Activated T-helper 1 cell treated with anti-CD3 and anti-CD28 coated beads, Interleukin-12 subunit alpha, Interleukin-12 subunit beta, Interleukin-2, Interleukin-4 antibody, amounts not matched to agents 30 ng/mL and 10 ng/mL and 1 ng/mL, durations not matched to agents 14 hours and 24 hours and 36 hours (primary cell): ENCODE measurements at regions of chr18 and their contacts with region 1.

Region 1: GRCh38 chr18:62186774-62187542 is at the starts of genes PIGN and RELCH:
- DNase-seq: peak; percentile 93
- H3K4me3 Mint-ChIP-seq: peak within 1 kb of the TSS; percentile 99
- H3K27ac Mint-ChIP-seq: peak within 1 kb of the TSS; percentile 96
- H3K4me1 Mint-ChIP-seq: peaks cover 68% of the 10 kb centered on the region
- H3K27me3 Mint-ChIP-seq: no peaks in the 10 kb centered on the region
- total RNA-seq, gene PIGN: 28.5 and 36.1 TPM in 2 replicates
- total RNA-seq, gene RELCH: 32.6 and 34.5 TPM in 2 replicates

Region 2: DNA sequence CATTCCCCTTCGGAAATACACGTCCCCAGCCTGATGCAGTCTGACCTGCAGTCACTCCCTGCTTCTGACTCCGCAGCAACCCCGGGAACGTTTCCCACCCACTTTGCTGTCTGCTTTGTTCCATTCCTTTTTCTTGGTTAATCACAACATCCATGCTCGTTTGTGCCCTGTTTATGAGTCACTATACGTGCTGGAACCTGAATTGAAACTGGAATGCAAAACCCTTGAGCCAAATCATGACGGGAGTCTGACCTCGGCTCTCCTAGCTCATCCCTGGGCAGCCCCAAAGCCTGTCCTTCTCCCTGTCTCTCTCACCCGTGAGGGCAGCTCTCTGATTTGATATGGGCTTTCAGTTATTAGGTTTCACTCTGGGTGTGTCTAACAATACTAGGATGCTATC is 237.0 kb before region 1 on chr18:
- intact Hi-C with region 1: loop called (anchors 5 kb)
- DNase-seq: no peak
- H3K4me3 Mint-ChIP-seq: no peak overlapping the region
- H3K27ac Mint-ChIP-seq: no peak overlapping the region
- H3K4me1 Mint-ChIP-seq: peaks cover 46% of the 10 kb centered on the region
- H3K27me3 Mint-ChIP-seq: peaks cover 34% of the 10 kb centered on the region

Region 3: DNA sequence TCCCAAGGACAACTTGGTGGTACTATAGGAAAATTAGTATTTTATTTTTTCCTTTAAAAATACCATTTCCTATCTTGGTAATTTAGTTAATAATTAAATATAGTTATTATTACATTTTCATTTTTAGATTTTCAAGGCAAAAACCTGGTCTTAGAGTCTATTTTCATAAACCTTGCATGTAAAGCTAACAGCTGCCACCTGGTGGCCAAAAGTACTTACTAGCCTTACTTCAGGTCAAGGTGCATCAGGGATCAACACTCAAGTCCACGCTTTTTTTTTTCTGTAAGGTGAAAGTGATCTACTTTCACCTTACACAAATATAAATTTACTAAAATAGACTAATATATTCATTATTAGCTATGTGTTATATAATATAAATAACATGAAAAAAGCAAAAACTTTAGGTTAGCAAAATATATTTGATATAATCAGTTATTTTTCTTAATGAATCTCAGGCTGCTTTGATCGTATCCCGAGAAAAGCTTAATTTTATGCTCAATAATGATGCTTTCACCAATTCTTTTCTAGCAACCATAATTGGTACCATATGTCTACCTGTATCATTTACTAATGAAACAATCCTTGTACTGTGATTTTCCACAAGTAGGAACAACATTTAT is 62.6 kb after region 1 on chr18:
- intact Hi-C with region 1: loop called (anchors 1 kb)
- DNase-seq: peak; percentile 38
- H3K4me3 Mint-ChIP-seq: no peak overlapping the region
- H3K27ac Mint-ChIP-seq: no peak overlapping the region
- H3K4me1 Mint-ChIP-seq: no peaks in the 10 kb centered on the region
- H3K27me3 Mint-ChIP-seq: no peaks in the 10 kb centered on the region

Region 4: DNA sequence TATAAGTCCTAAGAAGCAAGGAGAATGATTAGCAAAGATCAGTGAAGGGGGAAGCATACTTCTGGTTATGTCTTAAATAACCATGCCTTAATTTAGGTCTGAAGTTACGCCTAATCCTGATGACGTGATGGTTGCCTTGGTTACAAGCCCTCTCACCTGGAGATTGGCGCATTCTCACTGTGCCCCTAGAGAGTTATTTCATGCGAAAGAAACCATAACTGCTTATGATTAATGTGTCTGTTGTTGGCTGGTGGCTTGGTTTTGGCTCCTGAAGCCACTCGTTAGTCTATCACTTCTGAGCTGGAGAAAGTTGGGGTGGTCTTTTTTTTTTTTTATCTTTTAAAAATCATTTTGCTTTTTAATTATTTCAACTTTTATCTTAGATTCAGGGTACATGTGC is 185.2 kb after region 1 on chr18:
- intact Hi-C with region 1: no loop called
- DNase-seq: no peak
- H3K4me3 Mint-ChIP-seq: no peak overlapping the region
- H3K27ac Mint-ChIP-seq: no peak overlapping the region
- H3K4me1 Mint-ChIP-seq: peaks cover 74% of the 10 kb centered on the region
- H3K27me3 Mint-ChIP-seq: no peaks in the 10 kb centered on the region

Region 5: DNA sequence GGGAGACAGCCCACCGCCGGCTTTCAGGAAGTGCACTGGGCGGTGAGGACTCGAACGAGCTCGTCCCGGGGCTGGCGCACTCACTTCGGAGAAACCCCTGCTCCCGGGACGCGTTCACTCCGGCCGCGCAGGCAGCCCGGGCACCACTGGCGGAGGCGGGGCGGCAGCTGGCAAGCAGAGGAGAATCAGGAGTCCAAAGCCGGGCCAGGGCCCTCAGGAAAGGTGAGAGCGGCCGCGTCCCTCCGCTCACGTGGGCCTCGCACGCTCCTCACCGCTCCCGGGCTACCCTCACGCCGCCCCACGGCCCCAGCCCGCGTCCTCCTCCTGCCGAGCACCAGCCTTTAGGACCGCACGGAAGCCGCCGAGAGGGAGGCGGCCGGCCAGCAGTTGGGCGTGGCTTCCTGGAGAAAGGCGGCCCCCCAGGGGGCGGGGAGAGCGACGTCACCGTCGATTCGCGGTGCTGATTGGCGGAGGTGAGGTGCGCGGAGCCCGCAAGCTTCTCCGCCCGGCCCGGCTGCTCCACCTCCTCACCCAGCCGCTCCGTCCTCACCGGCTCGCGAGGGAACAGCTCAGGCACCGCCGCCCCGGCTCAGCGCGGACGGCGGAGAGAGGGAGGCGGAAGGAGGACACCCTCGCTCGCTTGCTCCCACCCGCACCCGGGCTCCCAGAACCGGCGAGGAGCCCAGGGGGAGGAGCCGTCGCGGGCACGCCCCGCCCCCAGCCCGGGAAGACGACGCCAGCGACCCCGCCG is 335.7 kb after region 1 on chr18 and contains the start of gene ZCCHC2:
- intact Hi-C with region 1: loop called (anchors 1 kb)
- DNase-seq: peak; percentile 99
- H3K4me3 Mint-ChIP-seq: peak within 1 kb of the TSS; percentile 98
- H3K27ac Mint-ChIP-seq: peak within 1 kb of the TSS; percentile 94
- H3K4me1 Mint-ChIP-seq: peaks cover 35% of the 10 kb centered on the region
- H3K27me3 Mint-ChIP-seq: peaks cover 4% of the 10 kb centered on the region
- total RNA-seq, gene ZCCHC2: 55.7 and 58.8 TPM in 2 replicates

Region 6: DNA sequence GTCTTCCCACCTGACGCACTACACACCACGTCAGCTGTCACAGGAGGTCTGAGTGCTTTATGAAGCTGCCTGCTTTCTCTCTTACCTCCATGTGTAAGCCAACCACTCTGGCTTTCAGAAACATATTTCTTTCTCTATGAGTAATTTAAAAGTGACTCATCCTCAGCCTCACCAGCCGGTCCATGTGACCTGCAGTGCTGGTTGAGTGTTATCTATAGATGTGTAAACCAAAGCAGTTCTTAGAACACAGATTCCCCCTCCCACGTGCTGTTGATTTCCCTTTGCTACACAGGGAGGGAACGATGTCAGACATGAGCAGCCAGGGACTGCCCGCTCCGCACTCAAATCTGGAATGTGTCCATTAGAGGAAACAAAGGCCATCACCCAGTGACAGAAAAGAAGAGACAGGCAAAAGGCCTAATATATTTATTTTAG is 974.8 kb after region 1 on chr18:
- intact Hi-C with region 1: loop called (anchors 2 kb)
- DNase-seq: peak; percentile 80
- H3K4me3 Mint-ChIP-seq: peak overlapping the region; percentile 83
- H3K27ac Mint-ChIP-seq: peak overlapping the region; percentile 99
- H3K4me1 Mint-ChIP-seq: peaks cover 92% of the 10 kb centered on the region
- H3K27me3 Mint-ChIP-seq: no peaks in the 10 kb centered on the region

Region 7: DNA sequence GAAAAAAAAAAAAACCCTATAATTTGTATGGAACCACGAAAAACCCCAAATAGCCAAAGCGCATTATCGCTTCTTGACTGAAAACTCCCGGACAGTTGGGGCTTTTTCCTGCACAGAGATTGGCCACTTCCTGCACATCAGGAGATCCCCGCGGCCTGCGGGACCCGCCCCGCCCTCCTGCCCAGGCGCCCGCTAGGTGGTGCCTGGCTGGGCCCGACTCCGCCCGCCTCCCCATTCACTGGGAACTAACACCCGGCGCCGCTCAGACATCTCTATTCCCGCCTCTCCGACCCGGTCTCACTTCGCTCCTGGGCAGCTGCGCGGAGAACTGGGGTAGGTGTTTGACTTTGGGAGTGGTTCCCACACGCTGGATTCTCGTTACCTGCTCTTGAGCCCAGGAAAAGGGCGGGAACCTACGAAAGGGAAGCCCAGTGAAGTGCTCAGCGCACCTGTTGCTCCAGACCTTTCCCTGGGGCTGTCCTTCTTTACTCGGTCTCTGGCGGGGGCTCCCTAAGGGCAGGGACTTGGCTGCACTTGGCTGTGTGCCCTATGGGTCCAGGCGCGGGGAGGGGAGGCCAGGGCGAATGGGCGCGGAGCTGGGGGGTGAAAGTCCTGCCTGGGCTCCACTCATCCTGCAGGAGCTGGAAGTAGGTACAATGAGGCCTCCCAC is 1762.2 kb after region 1 on chr18 and contains the start of gene HMSD:
- intact Hi-C with region 1: loop called (anchors 5 kb)
- DNase-seq: peak; percentile 68
- H3K4me3 Mint-ChIP-seq: peak within 1 kb of the TSS; percentile 88
- H3K27ac Mint-ChIP-seq: peak within 1 kb of the TSS; percentile 87
- H3K4me1 Mint-ChIP-seq: peaks cover 46% of the 10 kb centered on the region
- H3K27me3 Mint-ChIP-seq: peaks cover 5% of the 10 kb centered on the region
- total RNA-seq, gene HMSD: 19.7 and 27.8 TPM in 2 replicates